ENCODE measurements at regions of chr18 and their contacts with region 1.

Region 1: GRCh38 chr18:21489119-21489750 is 111.3 kb downstream of the ESCO1 start:
- DNase-seq: peak in 6 of 14 experiments; percentile 3 to 61 (median 37)
- ATAC-seq: no peak
- H3K4me3 ChIP-seq: no peak overlapping the region
- H3K4me3 Mint-ChIP-seq: no peak overlapping the region
- H3K27ac ChIP-seq: no peak overlapping the region
- H3K27ac Mint-ChIP-seq: no peak overlapping the region
- H3K4me1 ChIP-seq: no peaks in the 10 kb centered on the region
- H3K4me1 Mint-ChIP-seq: no peaks in the 10 kb centered on the region
- H3K27me3 ChIP-seq: no peaks in the 10 kb centered on the region
- H3K27me3 Mint-ChIP-seq: peaks cover 4% of the 10 kb centered on the region
- CTCF ChIP-seq: peak; percentile 48

Region 2: GRCh38 chr18:21851327-21851972 is 362.2 kb after region 1 on chr18:
- CTCF ChIA-PET with region 1: no interaction called
- POLR2A ChIA-PET with region 1: no interaction called
- intact Hi-C with region 1: loop called in 1 of 2 experiments (anchors 10 kb)
- DNase-seq: peak in 2 of 14 experiments; percentile 18 to 24
- ATAC-seq: no peak
- H3K4me3 ChIP-seq: no peak overlapping the region
- H3K4me3 Mint-ChIP-seq: no peak overlapping the region
- H3K27ac ChIP-seq: no peak overlapping the region
- H3K27ac Mint-ChIP-seq: no peak overlapping the region
- H3K4me1 ChIP-seq: no peaks in the 10 kb centered on the region
- H3K4me1 Mint-ChIP-seq: peaks cover 5% of the 10 kb centered on the region
- H3K27me3 ChIP-seq: no peaks in the 10 kb centered on the region
- H3K27me3 Mint-ChIP-seq: no peaks in the 10 kb centered on the region
- CTCF ChIP-seq: peak; percentile 41

Region 3: DNA sequence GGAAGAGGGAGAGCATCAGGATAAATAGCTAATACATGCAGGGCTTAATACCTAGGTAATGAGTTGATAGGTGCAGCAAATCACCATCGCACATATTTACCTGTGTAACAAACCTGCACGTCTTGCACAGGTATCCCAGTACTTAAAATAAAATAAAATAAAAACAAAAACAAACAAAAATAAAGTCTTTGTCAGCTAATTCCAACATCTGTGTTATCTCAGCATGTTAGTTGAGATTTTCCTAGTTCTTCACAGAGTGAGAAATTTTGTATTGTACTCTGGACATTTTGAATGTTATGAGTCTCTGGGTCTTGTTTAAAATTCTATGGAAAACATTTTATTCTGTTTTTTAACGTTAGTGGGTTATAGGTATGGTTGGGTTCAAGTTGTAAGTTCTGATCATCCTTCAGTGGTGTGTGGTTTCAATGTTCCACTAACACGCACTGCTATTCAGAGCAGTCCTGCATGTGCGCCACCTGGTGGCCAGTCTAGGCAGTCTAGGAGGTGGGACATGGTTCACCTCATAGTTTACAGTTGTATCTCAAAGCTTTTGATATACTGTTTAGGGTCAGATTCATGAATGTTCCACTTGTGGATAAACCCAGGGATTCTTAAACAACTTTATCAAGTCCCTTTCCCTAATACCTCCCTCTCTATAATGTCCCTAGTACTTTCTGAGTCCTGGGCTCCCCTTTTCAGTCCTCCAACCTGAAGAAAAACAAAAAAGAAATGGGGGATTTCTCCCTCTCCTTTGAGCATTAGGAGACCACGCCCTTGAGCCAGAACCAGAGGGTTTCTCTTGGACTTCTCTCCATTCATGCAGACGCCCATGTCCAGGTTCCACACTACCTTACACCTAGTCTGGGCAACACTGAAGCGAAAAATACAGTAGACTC is 466.8 kb after region 1 on chr18:
- CTCF ChIA-PET with region 1: interaction called, 3 read pairs
- POLR2A ChIA-PET with region 1: no interaction called
- intact Hi-C with region 1: loop called (anchors 1 kb)
- DNase-seq: peak; percentile 60 to 85 (median 75)
- ATAC-seq: peak; percentile 83
- H3K4me3 ChIP-seq: no peak overlapping the region
- H3K4me3 Mint-ChIP-seq: no peak overlapping the region
- H3K27ac ChIP-seq: no peak overlapping the region
- H3K27ac Mint-ChIP-seq: no peak overlapping the region
- H3K4me1 ChIP-seq: no peaks in the 10 kb centered on the region
- H3K4me1 Mint-ChIP-seq: no peaks in the 10 kb centered on the region
- H3K27me3 ChIP-seq: no peaks in the 10 kb centered on the region
- H3K27me3 Mint-ChIP-seq: peaks cover 30% of the 10 kb centered on the region
- CTCF ChIP-seq: peak; percentile 94

Region 4: DNA sequence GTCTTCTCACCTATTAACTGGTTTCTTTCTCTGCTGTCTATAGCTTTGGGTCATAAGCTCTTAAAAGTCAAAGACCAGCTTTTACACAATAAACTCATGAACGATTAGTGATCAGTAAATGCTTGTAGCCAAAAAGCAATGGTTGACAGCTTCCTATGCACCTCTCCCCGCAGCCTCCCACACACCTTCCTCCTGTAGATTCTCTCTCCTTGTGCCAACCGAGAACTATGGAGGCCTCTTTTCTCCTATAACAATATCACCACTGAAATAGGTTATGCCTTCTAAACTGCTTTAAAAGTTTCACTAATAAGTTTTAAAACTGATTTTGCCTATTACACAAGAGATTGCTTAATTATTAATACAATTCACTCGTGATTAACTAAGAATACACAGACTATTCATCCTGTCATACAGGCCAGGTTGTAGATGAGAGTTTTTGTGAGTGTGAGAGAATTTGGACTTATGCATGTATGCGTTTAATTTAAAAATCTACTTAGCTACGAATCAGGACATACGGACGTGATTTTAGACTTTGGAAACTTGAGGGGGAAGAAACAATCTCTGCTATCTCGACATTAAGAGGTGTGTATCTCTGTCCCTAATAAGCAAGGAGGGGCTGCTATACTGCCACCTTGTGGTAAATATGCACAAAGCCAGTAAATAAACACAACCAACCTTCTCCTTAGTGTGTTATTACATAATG is 1214.8 kb after region 1 on chr18:
- CTCF ChIA-PET with region 1: no interaction called
- POLR2A ChIA-PET with region 1: no interaction called
- intact Hi-C with region 1: loop called in 1 of 2 experiments (anchors 10 kb)
- DNase-seq: peak in 3 of 14 experiments; percentile 34 to 41 (median 36)
- ATAC-seq: no peak
- H3K4me3 ChIP-seq: no peak overlapping the region
- H3K4me3 Mint-ChIP-seq: no peak overlapping the region
- H3K27ac ChIP-seq: no peak overlapping the region
- H3K27ac Mint-ChIP-seq: no peak overlapping the region
- H3K4me1 ChIP-seq: no peaks in the 10 kb centered on the region
- H3K4me1 Mint-ChIP-seq: no peaks in the 10 kb centered on the region
- H3K27me3 ChIP-seq: peaks cover 0 to 5% of the 10 kb centered on the region in 2 experiments
- H3K27me3 Mint-ChIP-seq: peaks cover 22% of the 10 kb centered on the region
- CTCF ChIP-seq: peak; percentile 49